Heart left ventricle (tissue), 16 donors: ENCODE measurements at regions of chr5 and their contacts with region 1.

Region 1: DNA sequence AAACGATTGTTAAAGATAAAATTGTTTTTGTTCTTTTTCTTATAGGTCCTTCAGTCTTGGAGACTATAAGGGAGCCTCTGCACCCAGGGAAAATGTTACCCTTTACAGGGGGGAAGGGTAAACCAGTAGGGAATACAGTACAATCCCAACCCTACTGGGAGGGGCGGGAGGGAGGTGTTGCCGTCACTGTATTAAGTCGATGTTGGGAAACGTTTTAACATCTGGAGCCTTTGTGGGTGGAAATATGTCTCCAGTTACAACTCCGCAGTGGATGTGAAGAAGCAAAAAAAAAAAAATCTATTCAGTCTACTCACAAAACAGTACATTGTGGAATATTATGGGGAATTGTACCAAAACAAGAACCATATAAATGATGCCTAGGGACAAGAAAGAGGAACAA is 47.2 kb upstream of the FCHO2 start:
- DNase-seq: no peak
- ATAC-seq: no peak
- H3K4me3 ChIP-seq: no peak overlapping the region
- H3K27ac ChIP-seq: no peak overlapping the region
- H3K4me1 ChIP-seq: no peaks in the 10 kb centered on the region
- H3K27me3 ChIP-seq: no peaks in the 10 kb centered on the region
- CTCF ChIP-seq: no peak
- POLR2A ChIP-seq: no peak

Region 2: DNA sequence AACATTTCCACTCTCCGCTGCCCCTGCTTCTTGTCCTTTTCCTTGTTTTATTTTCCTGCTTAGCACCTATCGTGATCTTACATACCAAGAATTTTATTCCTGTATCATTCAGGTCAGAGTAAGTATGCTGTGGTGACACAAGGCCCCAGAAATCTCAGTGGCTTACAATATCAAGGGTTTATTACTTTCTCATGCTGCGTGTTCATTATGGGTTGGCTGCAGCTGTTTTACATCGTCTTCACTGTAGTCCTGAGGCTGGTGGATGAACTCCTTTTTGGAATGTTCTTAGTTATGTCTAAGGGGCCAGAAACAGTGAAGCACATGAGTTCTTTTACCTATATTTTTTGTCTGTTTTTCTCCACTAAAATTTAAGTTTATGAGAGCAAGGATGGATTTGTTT is 98.4 kb after region 1 on chr5:
- intact Hi-C with region 1: loop called in 1 of 10 experiments (anchors 10 kb)
- DNase-seq: no peak
- ATAC-seq: no peak
- H3K4me3 ChIP-seq: no peak overlapping the region
- H3K27ac ChIP-seq: no peak overlapping the region
- H3K4me1 ChIP-seq: no peaks in the 10 kb centered on the region
- H3K27me3 ChIP-seq: no peaks in the 10 kb centered on the region
- CTCF ChIP-seq: no peak
- POLR2A ChIP-seq: no peak